WTC11 (cell line): ENCODE measurements at regions of chr19 and their contacts with region 1.

Region 1: GRCh38 chr19:12847159-12848139 is 9.1 kb downstream of the MAST1 start:
- DNase-seq: peak; percentile 98
- ATAC-seq: peak; percentile 98
- H3K4me3 Mint-ChIP-seq: peak overlapping the region; percentile 58
- H3K27ac Mint-ChIP-seq: 0 out of 2 replicates have a peak overlapping the region, but pooled peaks have one; percentile 45
- H3K4me1 Mint-ChIP-seq: peaks cover 7% of the 10 kb centered on the region
- H3K27me3 Mint-ChIP-seq: peaks cover 21% of the 10 kb centered on the region
- CTCF ChIP-seq: peak; percentile 99

Region 2: DNA sequence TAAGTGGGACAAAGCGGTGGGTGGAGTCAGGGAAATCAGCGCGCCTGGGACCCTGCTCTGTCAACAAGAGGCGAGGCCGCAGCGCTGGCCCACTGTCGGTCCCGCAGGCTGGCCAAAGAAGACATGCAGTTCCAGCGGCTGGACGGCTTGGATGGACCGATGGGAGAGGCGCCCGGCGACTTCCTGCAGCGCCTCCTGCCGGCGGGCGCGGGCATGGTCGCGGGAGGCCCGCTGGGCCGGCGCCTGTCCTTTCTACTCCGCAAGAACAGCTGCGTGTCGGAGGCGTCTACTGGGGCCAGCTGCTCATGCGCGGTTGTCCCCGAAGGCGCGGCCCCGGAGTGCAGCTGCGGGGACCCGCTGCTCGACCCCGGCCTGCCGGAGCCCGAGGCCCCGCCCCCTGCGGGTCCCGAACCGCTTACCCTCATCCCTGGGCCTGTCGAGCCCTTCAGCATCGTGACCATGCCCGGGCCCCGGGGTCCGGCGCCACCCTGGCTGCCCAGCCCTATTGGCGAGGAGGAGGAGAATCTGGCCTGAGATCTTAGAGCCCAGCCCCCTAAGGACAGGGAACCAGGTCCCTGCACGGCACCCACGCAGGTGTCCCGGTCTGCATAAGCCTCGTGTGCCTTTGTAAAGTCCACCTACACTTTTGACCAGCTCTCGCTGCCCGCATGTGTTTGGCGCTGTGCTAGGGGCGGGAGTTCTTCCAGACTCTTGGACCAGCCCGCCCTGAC is 89.7 kb before region 1 on chr19:
- CTCF ChIA-PET with region 1: interaction called, 65 read pairs
- POLR2A ChIA-PET with region 1: no interaction called
- DNase-seq: peak; percentile 91
- ATAC-seq: peak; percentile 88
- H3K4me3 Mint-ChIP-seq: peak overlapping the region; percentile 59
- H3K27ac Mint-ChIP-seq: peak overlapping the region; percentile 63; the same call in 1 of the 2 replicates
- H3K4me1 Mint-ChIP-seq: peaks cover 2% of the 10 kb centered on the region; the same call in 1 of the 2 replicates
- H3K27me3 Mint-ChIP-seq: peaks cover 26% of the 10 kb centered on the region
- CTCF ChIP-seq: peak; percentile 96

Region 3: DNA sequence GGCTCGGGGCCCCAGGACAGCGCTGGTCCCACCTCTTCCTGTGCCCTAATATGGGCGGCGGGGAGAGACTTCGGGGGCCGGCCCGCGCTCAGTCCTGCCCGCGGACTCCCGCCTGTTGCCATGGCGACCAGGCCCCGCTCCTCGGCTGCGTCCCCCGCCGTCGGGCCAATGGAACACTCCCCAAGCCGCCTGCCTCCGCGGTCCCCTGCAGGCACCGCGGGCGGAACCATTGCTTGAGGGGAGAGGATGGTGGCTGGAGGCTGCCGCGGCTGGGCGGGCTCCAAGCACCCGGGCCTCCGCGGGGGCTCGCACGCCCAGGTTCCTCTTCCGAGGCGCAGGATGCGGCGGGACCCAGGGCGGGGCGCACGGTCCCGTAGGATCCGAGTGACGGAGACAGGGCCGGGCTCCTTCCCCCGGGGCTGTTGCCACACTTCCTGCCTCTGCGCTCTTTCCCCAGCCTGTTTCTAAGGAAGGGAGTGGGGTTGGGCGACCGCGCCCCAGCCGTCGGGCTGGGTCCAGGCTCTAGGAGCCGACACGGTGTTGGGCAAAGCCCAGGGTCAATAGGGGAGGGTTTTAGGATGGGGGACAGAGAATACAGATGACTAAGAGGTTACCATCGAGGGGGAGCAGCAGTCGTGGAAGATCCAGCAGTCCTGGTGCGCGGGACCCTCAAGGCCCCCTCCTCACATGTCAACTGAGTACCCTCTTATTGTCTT is 57.4 kb before region 1 on chr19:
- CTCF ChIA-PET with region 1: interaction called, 44 read pairs
- POLR2A ChIA-PET with region 1: no interaction called
- DNase-seq: peak; percentile 98
- ATAC-seq: peak; percentile 63
- H3K4me3 Mint-ChIP-seq: peak overlapping the region; percentile 84
- H3K27ac Mint-ChIP-seq: peak overlapping the region; percentile 79; the same call in 1 of the 2 replicates
- H3K4me1 Mint-ChIP-seq: peaks cover 29% of the 10 kb centered on the region
- H3K27me3 Mint-ChIP-seq: peaks cover 32% of the 10 kb centered on the region
- CTCF ChIP-seq: no peak

Region 4: GRCh38 chr19:12815088-12815487 is 32.4 kb before region 1 on chr19:
- CTCF ChIA-PET with region 1: interaction called, 10 read pairs
- POLR2A ChIA-PET with region 1: no interaction called
- DNase-seq: no peak
- ATAC-seq: no peak
- H3K4me3 Mint-ChIP-seq: no peak overlapping the region
- H3K27ac Mint-ChIP-seq: no peak overlapping the region
- H3K4me1 Mint-ChIP-seq: no peaks in the 10 kb centered on the region
- H3K27me3 Mint-ChIP-seq: no peaks in the 10 kb centered on the region
- CTCF ChIP-seq: no peak

Region 5: GRCh38 chr19:12867120-12868099 is 20.0 kb after region 1 on chr19:
- CTCF ChIA-PET with region 1: interaction called, 42 read pairs
- POLR2A ChIA-PET with region 1: interaction called, 4 read pairs
- DNase-seq: peak; percentile 91
- ATAC-seq: peak; percentile 81
- H3K4me3 Mint-ChIP-seq: peak overlapping the region; percentile 76
- H3K27ac Mint-ChIP-seq: peak overlapping the region; percentile 87
- H3K4me1 Mint-ChIP-seq: peaks cover 28% of the 10 kb centered on the region
- H3K27me3 Mint-ChIP-seq: peaks cover 12% of the 10 kb centered on the region; the same call in 1 of the 2 replicates
- CTCF ChIP-seq: no peak

Region 6: DNA sequence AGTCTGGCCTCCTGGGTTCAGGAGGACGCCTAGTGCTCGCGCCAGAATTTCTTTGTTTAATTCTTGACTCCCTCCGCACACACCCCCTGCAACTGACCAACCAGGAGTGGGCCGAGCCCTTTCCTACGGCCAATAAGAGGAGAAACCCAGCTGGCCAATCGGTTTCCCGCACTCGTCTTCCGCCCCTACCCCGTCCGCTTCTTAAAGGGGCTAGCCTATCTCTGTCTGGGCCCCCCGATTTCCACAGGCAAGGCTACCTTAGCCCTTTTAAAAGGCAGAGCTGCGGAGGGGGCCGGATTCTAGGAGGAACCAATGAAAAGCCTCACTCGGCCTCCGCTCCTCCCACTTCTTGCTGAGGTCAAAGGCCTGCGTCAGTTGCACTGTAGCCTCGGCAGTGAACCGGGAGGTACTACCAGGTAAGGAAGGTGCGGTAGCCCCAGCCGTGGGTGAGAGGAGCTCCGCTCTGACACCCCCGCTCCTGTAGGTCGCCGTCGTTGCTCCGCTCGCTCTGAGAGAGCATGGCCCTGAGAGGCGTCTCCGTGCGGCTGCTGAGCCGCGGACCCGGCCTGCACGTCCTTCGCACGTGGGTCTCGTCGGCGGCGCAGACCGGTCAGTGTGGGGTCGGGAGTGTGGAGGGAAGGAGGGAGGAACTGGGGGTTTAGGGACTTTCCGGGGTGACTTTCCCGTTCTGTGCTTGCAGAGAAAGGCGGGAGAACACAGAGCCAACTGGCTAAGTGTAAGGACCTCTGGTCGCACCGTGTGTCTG is 43.5 kb after region 1 on chr19 and contains the start of gene GCDH:
- CTCF ChIA-PET with region 1: interaction called, 40 read pairs
- POLR2A ChIA-PET with region 1: interaction called, 3 read pairs
- DNase-seq: peak; percentile 98
- ATAC-seq: peak; percentile 96
- H3K4me3 Mint-ChIP-seq: peak within 1 kb of the TSS; percentile 99
- H3K27ac Mint-ChIP-seq: peak within 1 kb of the TSS; percentile 96
- H3K4me1 Mint-ChIP-seq: peaks cover 22% of the 10 kb centered on the region
- H3K27me3 Mint-ChIP-seq: peaks cover 20% of the 10 kb centered on the region
- CTCF ChIP-seq: no peak
- total RNA-seq, gene GCDH: 58.6 to 69.0 TPM (median 59.8 TPM) in 3 replicates

Region 7: GRCh38 chr19:12907166-12907565 is 59.7 kb after region 1 on chr19:
- CTCF ChIA-PET with region 1: no interaction called
- POLR2A ChIA-PET with region 1: no interaction called
- DNase-seq: no peak
- ATAC-seq: no peak
- H3K4me3 Mint-ChIP-seq: no peak overlapping the region
- H3K27ac Mint-ChIP-seq: no peak overlapping the region
- H3K4me1 Mint-ChIP-seq: peaks cover 4% of the 10 kb centered on the region
- H3K27me3 Mint-ChIP-seq: no peaks in the 10 kb centered on the region
- CTCF ChIP-seq: no peak

Region 8: DNA sequence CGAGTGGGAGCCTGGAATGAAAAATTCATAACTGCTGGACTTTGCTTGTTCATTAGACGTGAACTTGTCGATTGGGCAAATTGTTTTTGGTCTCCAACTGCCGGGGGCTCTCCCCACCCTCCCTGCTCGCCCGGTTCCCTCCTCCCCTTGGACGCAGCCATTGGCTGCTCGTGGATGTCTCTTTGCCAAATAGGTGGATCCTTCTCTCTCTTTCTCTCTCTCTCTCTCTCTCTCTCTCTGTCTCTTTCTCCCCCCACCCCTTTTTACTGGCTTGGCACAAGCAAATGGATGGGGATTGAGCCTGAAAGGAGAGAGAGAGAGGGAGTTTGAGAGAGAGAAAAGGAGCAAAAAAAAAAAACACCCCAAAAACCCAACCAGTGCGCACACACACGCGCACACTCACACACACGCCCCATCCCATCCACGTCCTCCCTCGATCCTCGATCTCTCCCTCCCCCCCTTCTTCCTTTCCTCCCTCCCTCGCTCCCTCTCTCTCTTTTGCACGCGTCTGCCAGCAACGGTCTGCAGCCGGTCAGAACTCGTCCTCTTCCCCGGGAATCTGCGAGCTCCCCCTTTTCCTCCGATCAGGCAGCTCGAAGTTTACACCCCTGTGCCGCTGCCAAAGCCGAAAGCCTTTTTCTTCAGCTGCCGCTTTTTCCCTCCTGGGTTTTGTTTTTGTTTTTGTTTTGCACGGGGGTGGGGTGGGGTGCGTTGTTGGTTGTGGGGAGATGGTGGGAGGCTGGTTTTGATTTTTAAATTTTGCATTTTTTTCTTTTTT is 175.6 kb after region 1 on chr19:
- CTCF ChIA-PET with region 1: no interaction called
- POLR2A ChIA-PET with region 1: no interaction called
- DNase-seq: peak; percentile 61
- ATAC-seq: 0 out of 2 replicates have a peak, but pooled peaks have one; percentile 6
- H3K4me3 Mint-ChIP-seq: peak overlapping the region; percentile 57
- H3K27ac Mint-ChIP-seq: no peak overlapping the region
- H3K4me1 Mint-ChIP-seq: peaks cover 71% of the 10 kb centered on the region
- H3K27me3 Mint-ChIP-seq: peaks cover 100% of the 10 kb centered on the region
- CTCF ChIP-seq: no peak